CD4-positive, alpha-beta memory T cell (primary cell): ENCODE measurements at regions of chr11 and their contacts with region 1.

Region 1: DNA sequence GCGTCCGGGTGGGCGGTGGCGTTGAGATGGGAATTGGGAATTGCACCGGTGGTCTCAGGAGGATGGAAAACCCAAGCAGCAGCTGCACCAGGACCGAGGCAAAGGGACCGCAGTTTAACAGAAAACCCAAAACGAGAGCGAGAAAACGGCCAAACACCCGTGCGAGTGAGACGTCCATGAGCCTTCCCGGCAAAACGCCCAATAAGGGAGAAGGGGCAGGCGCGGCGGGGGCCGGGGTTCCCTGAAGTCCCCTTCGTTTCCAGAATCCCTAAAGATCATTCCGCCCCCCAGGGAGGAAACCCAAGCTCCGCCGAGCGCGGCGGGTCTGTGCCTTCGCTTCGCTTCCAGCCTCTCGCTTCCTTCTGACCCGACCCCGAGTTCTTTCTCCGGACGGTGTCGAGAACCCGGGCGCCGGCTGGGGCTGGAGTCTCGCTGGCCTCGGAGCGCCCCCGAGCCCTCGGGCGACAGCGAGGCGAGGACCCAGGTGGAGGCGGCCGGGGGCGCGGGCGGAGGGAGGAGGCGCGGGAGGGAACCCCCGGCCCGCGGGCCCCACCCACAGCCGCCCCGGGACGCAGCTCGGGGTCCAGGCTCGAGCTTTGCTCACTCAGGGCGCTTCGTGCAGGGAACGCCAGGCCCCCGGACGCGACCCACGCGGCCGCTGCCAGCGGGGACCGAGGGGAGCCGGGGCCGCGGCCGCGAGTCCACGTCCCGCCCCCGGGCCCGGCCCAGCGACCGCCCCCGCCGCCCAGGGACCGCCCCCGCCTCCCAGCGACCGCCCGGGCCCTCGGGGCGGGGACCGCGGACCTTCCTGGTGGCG is at the start of gene PGGHG:
- DNase-seq: peak in 3 of 5 donors; percentile 49 to 60 (median 51)
- H3K4me3 ChIP-seq: peak within 1 kb of the TSS; percentile 83 to 95
- H3K4me3 Mint-ChIP-seq: peak within 1 kb of the TSS; percentile 88 to 99 (median 98)
- H3K27ac ChIP-seq: peak within 1 kb of the TSS; percentile 96
- H3K27ac Mint-ChIP-seq: peak within 1 kb of the TSS; percentile 95 to 100 (median 98)
- H3K4me1 ChIP-seq: peaks cover 38% of the 10 kb centered on the region
- H3K4me1 Mint-ChIP-seq: peaks cover 14 to 51% (median 31%) of the 10 kb centered on the region in 4 donors
- H3K27me3 ChIP-seq: no peaks in the 10 kb centered on the region
- H3K27me3 Mint-ChIP-seq: no peaks in the 10 kb centered on the region
- total RNA-seq, gene PGGHG: 304 TPM

Region 2: DNA sequence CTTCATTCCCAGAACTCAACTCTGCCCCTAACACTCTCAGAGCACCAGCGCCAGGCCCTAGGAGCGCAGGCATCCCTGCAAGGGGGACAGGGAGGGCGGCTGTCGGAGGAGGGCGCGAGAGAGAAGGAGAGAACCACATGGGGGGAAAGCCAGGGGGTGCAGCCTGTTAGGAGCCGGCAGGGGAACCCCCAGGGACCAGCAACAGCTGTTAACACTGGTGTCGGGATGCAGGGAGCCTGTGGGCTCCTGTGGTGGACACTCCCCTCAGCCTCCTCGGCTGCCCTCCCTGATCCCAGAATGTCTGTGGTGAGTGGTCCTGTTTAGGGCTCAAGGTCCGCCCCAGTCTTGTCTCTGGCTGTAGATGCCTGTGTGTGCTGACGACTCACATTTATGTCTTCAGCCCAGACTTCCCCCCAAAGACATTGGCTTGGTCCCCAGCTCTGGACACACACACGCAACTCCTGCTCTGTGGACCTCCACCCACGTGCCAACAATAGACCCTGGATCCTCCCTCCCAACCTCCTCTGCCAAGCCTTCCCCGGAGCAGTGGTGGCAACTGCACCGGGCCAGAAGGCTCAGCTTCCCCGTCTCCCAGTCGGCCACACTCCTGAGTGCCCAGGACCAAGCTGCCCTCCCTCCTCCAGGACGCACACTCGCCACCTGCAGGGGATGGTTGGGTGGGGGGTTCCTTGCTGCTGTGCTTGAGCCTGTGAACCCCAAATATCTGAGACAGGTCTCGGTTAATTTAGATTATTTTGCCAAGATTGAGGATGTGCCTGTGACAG is 11.6 kb after region 1 on chr11:
- CTCF ChIA-PET with region 1: interaction called, 15 read pairs
- POLR2A ChIA-PET with region 1: interaction called, 148 read pairs
- intact Hi-C with region 1: no loop called
- DNase-seq: peak in 1 of 5 donors; percentile 19
- H3K4me3 ChIP-seq: no peak overlapping the region
- H3K4me3 Mint-ChIP-seq: no peak overlapping the region
- H3K27ac ChIP-seq: no peak overlapping the region
- H3K27ac Mint-ChIP-seq: peak overlapping the region in 3 of 7 donors; percentile 13 to 55 (median 35)
- H3K4me1 ChIP-seq: peaks cover 31% of the 10 kb centered on the region
- H3K4me1 Mint-ChIP-seq: peaks cover 11 to 43% (median 19%) of the 10 kb centered on the region in 4 donors
- H3K27me3 ChIP-seq: no peaks in the 10 kb centered on the region
- H3K27me3 Mint-ChIP-seq: peaks cover 0 to 3% of the 10 kb centered on the region in 2 donors

Region 3: DNA sequence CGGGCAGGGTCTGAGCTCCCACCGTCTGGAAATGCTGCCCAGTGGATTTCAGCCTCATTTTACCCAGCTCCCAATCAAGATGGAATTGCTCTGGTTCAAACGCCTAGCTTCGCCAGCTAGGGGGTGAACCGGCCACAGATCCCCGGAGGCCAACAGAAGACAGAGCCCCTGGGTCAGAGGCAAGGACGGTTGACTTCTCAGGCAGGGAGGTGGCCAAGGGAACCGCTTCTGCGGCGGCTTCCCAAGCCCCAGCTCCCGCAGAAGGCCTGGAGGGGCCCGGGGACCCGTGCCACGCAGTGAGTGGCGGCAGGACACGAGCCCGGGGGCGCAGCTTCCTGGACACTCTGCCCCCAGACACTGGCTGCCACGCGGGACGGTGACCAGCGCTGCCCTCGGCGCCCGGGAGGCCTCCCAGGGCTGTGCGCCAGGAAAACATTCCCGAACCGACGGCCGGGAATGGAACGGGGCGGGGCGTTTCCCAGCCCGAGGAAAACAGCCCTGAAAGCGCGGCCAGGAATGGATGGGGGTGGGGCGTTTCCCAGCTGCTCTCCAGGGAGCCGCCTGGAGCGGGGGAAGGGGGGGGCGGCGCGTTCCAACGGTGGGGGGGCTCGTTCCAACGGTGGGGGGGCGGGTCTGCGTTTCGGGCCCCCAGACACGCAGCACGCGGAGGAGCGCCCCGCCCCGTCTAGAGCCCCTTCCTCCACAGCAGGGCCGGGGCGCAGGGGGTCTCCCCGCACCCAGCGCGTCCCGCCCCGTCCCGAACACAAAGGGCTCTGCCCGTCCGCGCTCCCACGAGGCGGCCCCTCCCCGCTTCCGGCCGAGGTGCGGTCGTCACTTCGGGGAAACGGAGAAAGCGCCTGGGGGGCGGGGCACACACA is 67.3 kb after region 1 on chr11:
- CTCF ChIA-PET with region 1: interaction called, 3 read pairs
- POLR2A ChIA-PET with region 1: interaction called, 15 read pairs
- intact Hi-C with region 1: no loop called
- DNase-seq: peak; percentile 85 to 90 (median 86)
- H3K4me3 ChIP-seq: peak overlapping the region in 1 of 2 donors; percentile 59
- H3K4me3 Mint-ChIP-seq: peak overlapping the region; percentile 77 to 91 (median 84)
- H3K27ac ChIP-seq: peak overlapping the region; percentile 89
- H3K27ac Mint-ChIP-seq: peak overlapping the region in 6 of 7 donors; percentile 96 to 99 (median 97)
- H3K4me1 ChIP-seq: peaks cover 20% of the 10 kb centered on the region
- H3K4me1 Mint-ChIP-seq: peaks cover 7 to 50% (median 29%) of the 10 kb centered on the region in 4 donors
- H3K27me3 ChIP-seq: no peaks in the 10 kb centered on the region
- H3K27me3 Mint-ChIP-seq: no peaks in the 10 kb centered on the region

Region 4: DNA sequence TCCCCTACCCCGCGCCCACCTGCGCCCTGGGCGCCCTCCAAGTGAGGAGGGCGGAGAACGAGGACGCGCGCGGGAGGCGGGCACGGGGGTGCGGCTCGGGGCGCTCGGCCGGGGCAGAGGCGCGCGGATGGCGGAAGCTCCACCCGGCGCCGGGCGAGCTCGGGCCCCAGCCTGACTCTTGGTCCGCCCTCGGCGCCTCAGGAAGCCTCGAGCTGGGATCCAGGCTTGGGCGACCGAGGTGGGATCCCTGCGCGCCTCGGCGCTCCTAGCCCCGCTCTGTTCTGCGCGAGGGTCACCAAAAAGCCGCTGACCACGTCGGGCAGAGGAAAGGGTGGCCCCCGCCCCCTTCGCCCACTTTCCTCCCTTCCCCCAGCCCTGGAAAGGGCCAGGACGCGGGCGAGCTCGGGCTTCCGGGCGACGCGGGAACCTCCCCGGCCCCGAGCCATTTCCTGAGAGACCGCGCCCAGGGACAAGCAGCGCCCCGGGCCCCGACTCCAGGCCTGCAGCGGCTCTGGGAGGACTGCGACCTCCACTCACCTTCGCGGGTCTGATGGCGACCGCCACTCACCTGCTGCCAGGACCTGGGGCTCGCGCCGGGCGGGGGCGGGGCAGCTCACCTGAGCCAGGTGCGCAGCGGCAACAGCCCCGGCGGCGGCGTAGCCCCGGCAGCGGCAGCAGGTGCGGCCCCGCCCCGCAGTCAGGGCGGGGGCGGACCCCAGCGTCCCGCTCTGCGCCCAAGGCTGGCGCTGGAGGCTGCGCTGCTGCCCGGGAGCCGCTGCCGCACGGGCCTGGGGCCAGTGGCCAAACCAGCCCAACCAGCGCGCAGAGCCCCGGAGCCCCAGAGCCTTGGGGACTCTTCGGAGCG is 128.5 kb after region 1 on chr11:
- CTCF ChIA-PET with region 1: no interaction called
- POLR2A ChIA-PET with region 1: interaction called, 27 read pairs
- intact Hi-C with region 1: no loop called
- DNase-seq: peak in 4 of 5 donors; percentile 38 to 54 (median 45)
- H3K4me3 ChIP-seq: peak overlapping the region; percentile 17 to 73
- H3K4me3 Mint-ChIP-seq: peak overlapping the region; percentile 26 to 100 (median 96)
- H3K27ac ChIP-seq: peak overlapping the region; percentile 61
- H3K27ac Mint-ChIP-seq: peak overlapping the region in 4 of 7 donors; percentile 70 to 92 (median 83)
- H3K4me1 ChIP-seq: peaks cover 31% of the 10 kb centered on the region
- H3K4me1 Mint-ChIP-seq: peaks cover 4 to 42% (median 17%) of the 10 kb centered on the region in 4 donors
- H3K27me3 ChIP-seq: no peaks in the 10 kb centered on the region
- H3K27me3 Mint-ChIP-seq: no peaks in the 10 kb centered on the region